Psoas muscle (tissue), 8 donors: ENCODE measurements at regions of chrX and their contacts with region 1.

Region 1: GRCh38 chrX:43349363-43349762 is 306.7 kb upstream of the MAOA start:
- DNase-seq: no peak
- ATAC-seq: no peak
- H3K4me3 ChIP-seq: no peak overlapping the region
- H3K27ac ChIP-seq: no peak overlapping the region
- H3K4me1 ChIP-seq: no peaks in the 10 kb centered on the region
- H3K27me3 ChIP-seq: peaks cover 0 to 2% (median 0%) of the 10 kb centered on the region in 3 donors
- CTCF ChIP-seq: peak; percentile 43

Region 2: GRCh38 chrX:43255596-43255995 is 93.8 kb before region 1 on chrX:
- intact Hi-C with region 1: no loop called
- DNase-seq: no peak
- ATAC-seq: no peak
- H3K4me3 ChIP-seq: no peak overlapping the region
- H3K27ac ChIP-seq: no peak overlapping the region
- H3K4me1 ChIP-seq: no peaks in the 10 kb centered on the region
- H3K27me3 ChIP-seq: no peaks in the 10 kb centered on the region
- CTCF ChIP-seq: no peak

Region 3: GRCh38 chrX:43750248-43750676 is 400.9 kb after region 1 on chrX:
- intact Hi-C with region 1: loop called in 1 of 2 experiments (anchors 2 kb)
- DNase-seq: peak; percentile 23 to 49
- ATAC-seq: peak; percentile 65 to 90 (median 78)
- H3K4me3 ChIP-seq: no peak overlapping the region
- H3K27ac ChIP-seq: no peak overlapping the region
- H3K4me1 ChIP-seq: no peaks in the 10 kb centered on the region
- H3K27me3 ChIP-seq: peaks cover 0 to 6% (median 0%) of the 10 kb centered on the region in 3 donors
- CTCF ChIP-seq: peak; percentile 56